Activated CD4-positive, alpha-beta T cell treated with anti-CD3 and anti-CD28 coated beads, Interleukin-2, amount 10 ng/mL, durations not matched to agents 24 days and 14 days (primary cell): ENCODE measurements at regions of chr19 and their contacts with region 1.

Region 1: DNA sequence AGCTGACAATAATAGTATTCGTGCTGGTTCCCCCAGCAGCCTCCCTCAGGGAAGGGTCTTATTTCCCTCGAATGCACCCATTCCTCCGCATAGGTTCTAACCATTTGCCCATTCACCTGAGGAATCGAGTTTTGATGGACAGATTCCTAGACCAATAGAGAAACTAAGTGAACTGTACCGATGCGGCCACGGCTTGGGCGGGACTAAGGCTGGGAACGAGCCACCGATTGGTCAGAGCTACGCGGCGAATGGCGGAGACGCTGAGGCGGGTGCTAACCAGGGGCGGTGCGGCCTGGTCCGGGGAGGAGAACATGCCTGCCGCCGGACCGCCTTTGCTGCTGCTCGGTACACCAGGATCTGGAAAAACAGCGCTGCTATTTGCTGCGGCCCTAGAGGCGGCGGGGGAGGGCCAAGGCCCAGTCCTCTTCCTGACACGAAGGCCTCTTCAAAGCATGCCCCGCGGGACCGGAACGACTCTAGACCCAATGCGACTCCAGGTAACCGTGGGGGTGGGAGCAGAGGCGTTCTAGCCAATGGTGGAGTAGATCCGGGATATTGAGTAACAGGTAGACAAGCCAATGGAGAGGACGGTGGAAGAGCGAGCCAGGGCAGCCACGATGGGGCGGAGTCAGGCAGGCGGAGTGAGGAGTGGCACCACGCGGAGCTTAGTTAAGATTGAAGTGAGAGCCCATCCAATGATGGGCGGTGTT is at the start of gene SWSAP1:
- DNase-seq: peak; percentile 99
- H3K4me3 Mint-ChIP-seq: no peak within 1 kb of the TSS
- H3K27ac Mint-ChIP-seq: no peak within 1 kb of the TSS
- H3K4me1 Mint-ChIP-seq: peaks cover 25% of the 10 kb centered on the region
- H3K27me3 Mint-ChIP-seq: no peaks in the 10 kb centered on the region
- total RNA-seq, gene SWSAP1: 2.3 and 2.6 TPM in 2 replicates

Region 2: DNA sequence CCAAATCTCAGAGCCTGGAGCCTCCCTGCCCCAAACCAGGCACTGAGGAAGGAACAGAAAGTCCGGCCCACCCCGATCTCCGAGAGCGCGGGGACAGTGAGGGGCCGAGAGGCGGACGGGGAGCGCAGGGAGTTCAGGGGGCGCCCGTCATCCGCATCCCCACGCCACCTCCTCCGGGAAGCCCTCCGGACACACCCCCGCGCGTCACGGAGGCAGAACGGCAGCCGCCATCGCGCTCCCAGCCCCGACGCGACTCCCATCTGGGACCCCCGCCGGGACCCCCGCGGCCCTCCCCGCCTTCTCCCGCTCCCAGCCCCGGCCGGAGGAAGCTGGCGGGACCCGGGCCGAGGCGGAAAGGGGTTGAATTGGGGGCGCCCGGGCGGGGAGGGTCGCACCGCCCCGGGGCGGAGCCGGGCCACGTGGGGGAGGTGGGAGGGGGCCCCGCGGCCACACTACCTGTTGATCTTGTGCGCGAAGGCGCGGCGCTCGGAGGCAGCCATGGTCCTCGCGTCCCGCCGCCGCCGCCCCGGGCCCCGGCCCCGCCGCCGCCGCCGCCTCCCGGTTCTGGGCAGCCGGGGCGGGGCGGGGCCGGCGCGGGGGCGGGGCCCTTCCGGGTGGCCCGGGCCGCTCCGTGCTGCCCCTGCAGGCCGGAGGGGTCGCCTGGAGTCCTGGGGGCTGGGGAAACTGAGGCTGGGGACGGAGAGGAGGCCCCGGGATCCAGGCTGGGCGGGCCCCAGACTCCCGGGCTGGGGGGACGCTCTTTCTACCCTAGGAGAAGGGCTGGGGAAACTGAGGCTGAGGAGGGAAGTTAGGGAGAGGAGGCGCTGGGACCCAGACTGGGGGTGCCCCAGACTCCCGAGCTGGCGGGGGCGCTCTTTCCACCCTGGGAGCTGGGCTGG is 112.4 kb before region 1 on chr19 and contains the start of gene DOCK6:
- intact Hi-C with region 1: no loop called
- DNase-seq: no peak
- H3K4me3 Mint-ChIP-seq: peak within 1 kb of the TSS; percentile 72
- H3K27ac Mint-ChIP-seq: no peak within 1 kb of the TSS
- H3K4me1 Mint-ChIP-seq: peaks cover 3% of the 10 kb centered on the region
- H3K27me3 Mint-ChIP-seq: peaks cover 54% of the 10 kb centered on the region
- total RNA-seq, gene DOCK6: 1.2 and 2.2 TPM in 2 replicates

Region 3: DNA sequence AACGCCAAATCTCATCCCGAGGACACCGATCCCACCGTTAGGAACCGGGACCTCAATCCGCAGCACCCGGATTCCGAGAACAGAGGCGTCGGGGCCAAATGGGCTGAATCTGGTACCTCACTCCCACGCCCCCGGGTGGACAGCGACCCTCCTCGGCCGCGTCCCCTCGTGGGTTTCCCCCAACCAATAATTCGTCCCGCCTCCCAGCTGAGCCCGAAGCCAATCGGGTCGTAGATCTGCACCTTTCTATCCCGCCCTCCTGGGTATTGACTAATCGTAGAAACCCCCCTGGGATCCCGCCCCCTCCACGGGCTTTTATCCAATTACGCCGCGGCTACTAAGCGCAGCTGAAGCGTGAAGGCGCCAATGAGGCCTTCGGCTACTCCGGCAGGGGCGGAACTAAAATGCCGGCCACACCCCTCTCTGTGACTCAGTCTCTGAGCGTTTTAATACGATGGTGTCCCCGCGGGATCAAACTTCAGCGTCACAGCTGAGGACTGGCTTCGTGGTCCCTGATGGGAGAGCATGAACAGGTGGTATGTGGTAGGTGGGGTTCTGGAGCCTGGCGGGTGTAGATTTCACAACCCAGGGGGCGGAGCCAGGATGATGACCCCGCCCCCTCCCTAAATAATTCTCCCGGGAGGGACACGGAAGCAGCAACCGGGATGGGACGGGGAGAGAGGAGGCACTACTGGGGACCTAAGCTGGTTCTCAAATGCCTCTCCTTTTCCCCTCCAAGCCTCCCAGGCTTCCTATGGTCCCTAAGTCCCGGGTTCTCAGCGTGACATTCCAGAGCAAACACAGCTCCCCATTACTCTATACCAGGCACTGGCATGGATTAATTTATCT is 28.3 kb before region 1 on chr19 and contains the starts of genes CCDC159 and TMEM205:
- intact Hi-C with region 1: loop called (anchors 1 kb)
- DNase-seq: peak; percentile 99
- H3K4me3 Mint-ChIP-seq: peak within 1 kb of the TSS; percentile 89
- H3K27ac Mint-ChIP-seq: peak within 1 kb of the TSS; percentile 89
- H3K4me1 Mint-ChIP-seq: peaks cover 23% of the 10 kb centered on the region
- H3K27me3 Mint-ChIP-seq: no peaks in the 10 kb centered on the region
- total RNA-seq, gene CCDC159: 11.7 and 14.8 TPM in 2 replicates
- total RNA-seq, gene TMEM205: 29.9 and 34.2 TPM in 2 replicates

Region 4: GRCh38 chr19:11361037-11361770 is 13.4 kb before region 1 on chr19:
- intact Hi-C with region 1: no loop called
- DNase-seq: peak; percentile 66
- H3K4me3 Mint-ChIP-seq: no peak overlapping the region
- H3K27ac Mint-ChIP-seq: no peak overlapping the region
- H3K4me1 Mint-ChIP-seq: peaks cover under 1% of the 10 kb centered on the region
- H3K27me3 Mint-ChIP-seq: peaks cover 5% of the 10 kb centered on the region